ENCODE measurements at regions of chr5 and their contacts with region 1.

Region 1: GRCh38 chr5:132963175-132964104 is at the start of gene AFF4:
- DNase-seq: peak; percentile 97
- H3K4me3 ChIP-seq: peak within 1 kb of the TSS; percentile 23 to 98 (median 77)
- H3K27ac ChIP-seq: peak within 1 kb of the TSS; percentile 94 to 100 (median 100)
- H3K4me1 ChIP-seq: peaks cover 27 to 30% of the 10 kb centered on the region in 2 donors
- H3K27me3 ChIP-seq: no peaks in the 10 kb centered on the region
- CTCF ChIP-seq: peak in 1 of 6 experiments; percentile 11
- POLR2A ChIP-seq: peak; percentile 93 to 99
- total RNA-seq, gene AFF4: 81.7 to 150 (median 95.7) TPM

Region 2: GRCh38 chr5:132629230-132629944 is 334.1 kb before region 1 on chr5:
- intact Hi-C with region 1: no loop called
- DNase-seq: no peak
- H3K4me3 ChIP-seq: no peak overlapping the region
- H3K27ac ChIP-seq: no peak overlapping the region
- H3K4me1 ChIP-seq: no peaks in the 10 kb centered on the region
- H3K27me3 ChIP-seq: no peaks in the 10 kb centered on the region
- CTCF ChIP-seq: no peak
- POLR2A ChIP-seq: no peak

Region 3: GRCh38 chr5:133025804-133026663 is 62.6 kb after region 1 on chr5 and contains the start of gene ZCCHC10:
- intact Hi-C with region 1: loop called (anchors 10 kb)
- DNase-seq: peak; percentile 89 to 90
- H3K4me3 ChIP-seq: peak within 1 kb of the TSS; percentile 31 to 83 (median 52)
- H3K27ac ChIP-seq: peak within 1 kb of the TSS; percentile 15 to 95 (median 87)
- H3K4me1 ChIP-seq: peaks cover 3 to 5% of the 10 kb centered on the region in 2 donors
- H3K27me3 ChIP-seq: no peaks in the 10 kb centered on the region
- CTCF ChIP-seq: no peak
- POLR2A ChIP-seq: peak in 1 of 2 donors; percentile 82
- total RNA-seq, gene ZCCHC10: 24.7 to 43.4 (median 30.7) TPM

Region 4: GRCh38 chr5:133051580-133052332 is 88.3 kb after region 1 on chr5 and contains the start of gene HSPA4:
- intact Hi-C with region 1: loop called (anchors 10 kb)
- DNase-seq: peak; percentile 98 to 99
- H3K4me3 ChIP-seq: peak within 1 kb of the TSS; percentile 77 to 99 (median 99)
- H3K27ac ChIP-seq: peak within 1 kb of the TSS; percentile 95 to 100 (median 100)
- H3K4me1 ChIP-seq: peaks cover 13 to 27% of the 10 kb centered on the region in 2 donors
- H3K27me3 ChIP-seq: no peaks in the 10 kb centered on the region
- CTCF ChIP-seq: no peak
- POLR2A ChIP-seq: peak; percentile 79 to 97
- total RNA-seq, gene HSPA4: 49.9 to 72.0 (median 70.5) TPM

Measured in thyroid gland (tissue), 4 donors.